ENCODE measurements at regions of chr12 and their contacts with region 1.

Region 1: DNA sequence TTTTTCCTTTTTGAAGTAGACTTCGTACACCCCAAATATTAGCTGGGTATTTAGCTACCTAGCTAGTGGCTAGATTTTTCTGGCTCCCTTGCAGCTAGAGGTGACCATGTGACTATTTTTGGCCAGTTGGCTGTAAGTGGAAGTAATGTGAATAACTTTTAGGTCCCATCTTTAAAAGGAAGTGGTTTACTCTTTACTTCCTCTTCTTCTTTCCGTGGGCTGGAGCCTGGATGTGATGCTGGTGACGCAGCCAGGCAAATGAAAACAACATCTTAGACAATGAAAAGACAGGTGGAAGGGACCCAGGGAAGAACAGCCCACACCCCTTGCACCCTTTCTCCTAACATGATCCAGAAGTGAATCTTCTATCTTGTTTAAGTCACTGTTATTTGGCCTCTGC is 245.5 kb downstream of the ATP23 start:
- DNase-seq: no peak
- ATAC-seq: no peak
- H3K4me3 Mint-ChIP-seq: no peak overlapping the region
- H3K27ac Mint-ChIP-seq: no peak overlapping the region
- H3K4me1 Mint-ChIP-seq: no peaks in the 10 kb centered on the region
- H3K27me3 Mint-ChIP-seq: peaks cover 2% of the 10 kb centered on the region

Region 2: GRCh38 chr12:58238411-58238810 is 51.5 kb after region 1 on chr12:
- CTCF ChIA-PET with region 1: no interaction called
- POLR2A ChIA-PET with region 1: no interaction called
- intact Hi-C with region 1: loop called in 1 of 2 experiments (anchors 5 kb)
- DNase-seq: no peak
- ATAC-seq: no peak
- H3K4me3 Mint-ChIP-seq: no peak overlapping the region
- H3K27ac Mint-ChIP-seq: no peak overlapping the region
- H3K4me1 Mint-ChIP-seq: no peaks in the 10 kb centered on the region
- H3K27me3 Mint-ChIP-seq: peaks cover 7% of the 10 kb centered on the region

Measured in activated CD4-positive, alpha-beta T cell treated with anti-CD3 and anti-CD28 coated beads for 36 hours (primary cell).